Natural killer cell (primary cell): ENCODE measurements at regions of chr19 and their contacts with region 1.

Region 1: GRCh38 chr19:45506246-45506990 is 861 bp upstream of the VASP start:
- DNase-seq: peak; percentile 97 to 98
- ATAC-seq: peak; percentile 74 to 89 (median 78)
- H3K4me3 ChIP-seq: peak overlapping the region; percentile 98
- H3K4me3 Mint-ChIP-seq: peak overlapping the region; percentile 92
- H3K27ac ChIP-seq: peak overlapping the region; percentile 93
- H3K27ac Mint-ChIP-seq: peak overlapping the region; percentile 81 to 97
- H3K4me1 ChIP-seq: peaks cover 40% of the 10 kb centered on the region
- H3K4me1 Mint-ChIP-seq: peaks cover 28 to 40% of the 10 kb centered on the region in 2 donors
- H3K27me3 ChIP-seq: no peaks in the 10 kb centered on the region
- H3K27me3 Mint-ChIP-seq: no peaks in the 10 kb centered on the region
- CTCF ChIP-seq: peak; percentile 53

Region 2: GRCh38 chr19:45306518-45307027 is 199.8 kb before region 1 on chr19:
- intact Hi-C with region 1: no loop called
- DNase-seq: no peak
- ATAC-seq: no peak
- H3K4me3 ChIP-seq: no peak overlapping the region
- H3K4me3 Mint-ChIP-seq: no peak overlapping the region
- H3K27ac ChIP-seq: no peak overlapping the region
- H3K27ac Mint-ChIP-seq: no peak overlapping the region
- H3K4me1 ChIP-seq: no peaks in the 10 kb centered on the region
- H3K4me1 Mint-ChIP-seq: peaks cover 9 to 11% of the 10 kb centered on the region in 2 donors
- H3K27me3 ChIP-seq: no peaks in the 10 kb centered on the region
- H3K27me3 Mint-ChIP-seq: no peaks in the 10 kb centered on the region
- CTCF ChIP-seq: no peak

Region 3: DNA sequence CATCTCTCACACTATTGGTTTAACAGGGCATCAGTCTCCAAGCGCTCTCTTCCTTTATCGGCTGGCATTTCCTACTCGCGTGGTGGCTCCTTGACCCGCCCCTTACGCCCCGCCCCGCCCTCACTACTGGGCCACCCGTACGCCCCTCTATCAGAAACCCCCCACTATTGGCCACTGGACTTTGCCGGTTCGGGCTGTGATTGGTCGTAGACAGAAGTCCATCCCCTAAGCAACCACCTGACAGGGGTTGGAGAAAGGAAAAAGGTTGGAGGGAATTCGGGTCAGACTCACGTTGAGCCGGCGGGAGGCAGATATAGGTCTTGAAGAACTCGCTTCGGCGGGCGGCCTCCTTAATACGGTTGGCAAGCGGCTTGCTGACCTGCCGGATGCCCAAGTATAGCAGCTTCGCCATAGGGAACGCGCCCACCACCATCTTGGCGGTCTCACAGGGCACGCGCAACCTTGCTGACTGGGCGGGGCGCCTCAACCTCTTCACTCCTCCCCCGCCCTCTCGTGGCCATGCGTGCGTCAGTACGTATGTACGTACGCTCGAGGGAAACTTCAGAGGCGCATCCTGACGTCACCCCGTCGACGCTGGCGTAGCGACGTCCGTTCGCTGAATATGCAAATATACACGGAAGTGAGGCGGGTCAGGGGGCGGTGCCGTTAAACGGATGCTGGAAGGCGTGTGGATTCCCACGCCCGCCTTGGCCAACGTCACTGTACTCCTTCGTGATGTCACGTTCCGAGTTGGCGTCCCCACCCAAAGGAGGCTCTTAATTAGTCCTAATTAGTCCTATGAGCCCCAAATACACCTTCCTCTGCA is 78.1 kb after region 1 on chr19 and contains the start of gene OPA3:
- intact Hi-C with region 1: loop called (anchors 1 kb)
- DNase-seq: peak; percentile 98 to 100
- ATAC-seq: peak; percentile 84 to 95 (median 84)
- H3K4me3 ChIP-seq: peak within 1 kb of the TSS; percentile 77
- H3K4me3 Mint-ChIP-seq: peak within 1 kb of the TSS; percentile 89
- H3K27ac ChIP-seq: peak within 1 kb of the TSS; percentile 96
- H3K27ac Mint-ChIP-seq: peak within 1 kb of the TSS; percentile 95 to 96
- H3K4me1 ChIP-seq: peaks cover 16% of the 10 kb centered on the region
- H3K4me1 Mint-ChIP-seq: peaks cover 14 to 33% of the 10 kb centered on the region in 2 donors
- H3K27me3 ChIP-seq: no peaks in the 10 kb centered on the region
- H3K27me3 Mint-ChIP-seq: peaks cover 4 to 6% of the 10 kb centered on the region in 2 donors
- CTCF ChIP-seq: no peak
- total RNA-seq, gene OPA3: 8.2 to 10.4 (median 9.0) TPM

Region 4: GRCh38 chr19:45681391-45682015 is 175.1 kb after region 1 on chr19:
- intact Hi-C with region 1: no loop called
- DNase-seq: peak; percentile 89 to 91
- ATAC-seq: peak; percentile 92 to 99 (median 95)
- H3K4me3 ChIP-seq: peak overlapping the region; percentile 23
- H3K4me3 Mint-ChIP-seq: peak overlapping the region; percentile 81
- H3K27ac ChIP-seq: no peak overlapping the region
- H3K27ac Mint-ChIP-seq: peak overlapping the region; percentile 7 to 86
- H3K4me1 ChIP-seq: peaks cover 30% of the 10 kb centered on the region
- H3K4me1 Mint-ChIP-seq: peaks cover 17 to 24% of the 10 kb centered on the region in 2 donors
- H3K27me3 ChIP-seq: peaks cover 11% of the 10 kb centered on the region
- H3K27me3 Mint-ChIP-seq: peaks cover 0 to 12% of the 10 kb centered on the region in 2 donors
- CTCF ChIP-seq: peak; percentile 94

Region 5: GRCh38 chr19:45717166-45717982 is 211.0 kb after region 1 on chr19:
- intact Hi-C with region 1: loop called (anchors 1 kb)
- DNase-seq: peak; percentile 95 to 98
- ATAC-seq: peak; percentile 94 to 99 (median 95)
- H3K4me3 ChIP-seq: peak overlapping the region; percentile 63
- H3K4me3 Mint-ChIP-seq: peak overlapping the region; percentile 98
- H3K27ac ChIP-seq: peak overlapping the region; percentile 96
- H3K27ac Mint-ChIP-seq: peak overlapping the region; percentile 90 to 93
- H3K4me1 ChIP-seq: peaks cover 18% of the 10 kb centered on the region
- H3K4me1 Mint-ChIP-seq: peaks cover 25 to 35% of the 10 kb centered on the region in 2 donors
- H3K27me3 ChIP-seq: no peaks in the 10 kb centered on the region
- H3K27me3 Mint-ChIP-seq: no peaks in the 10 kb centered on the region
- CTCF ChIP-seq: no peak